ENCODE measurements at regions of chr19 and their contacts with region 1.

Region 1: DNA sequence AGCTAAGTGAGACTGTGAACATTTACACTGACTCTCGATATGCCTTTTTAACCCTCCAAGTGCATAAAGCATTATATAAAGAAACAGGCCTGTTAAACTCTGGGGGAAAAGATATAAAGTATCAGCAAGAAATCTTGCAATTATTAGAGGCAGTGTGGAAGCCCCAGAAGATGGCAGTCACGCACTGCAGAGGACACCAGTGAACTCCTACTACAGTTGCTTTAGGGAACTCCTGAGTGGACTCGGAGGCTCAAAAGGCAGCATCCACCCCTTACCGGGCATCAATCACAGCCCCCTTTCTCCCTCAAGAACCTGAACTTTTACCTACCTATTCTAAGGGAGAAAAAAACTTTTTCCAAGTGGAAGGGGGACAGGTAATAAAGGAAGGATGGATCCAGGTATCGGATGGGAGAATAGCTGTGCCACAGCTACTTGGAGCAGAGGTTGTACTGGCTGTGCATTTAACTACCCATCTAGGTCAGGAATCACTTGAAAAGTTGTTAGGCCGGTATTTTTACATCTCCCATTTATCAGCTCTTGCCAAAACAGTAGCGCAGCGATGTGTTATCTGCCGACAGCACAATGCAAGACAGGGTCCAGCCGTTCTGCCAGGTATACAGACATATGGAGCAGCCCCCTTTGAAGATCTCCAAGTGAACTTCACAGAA is 80.1 kb downstream of the ZNF486 start:
- DNase-seq: peak; percentile 59
- ATAC-seq: peak; percentile 28
- H3K4me3 ChIP-seq: no peak overlapping the region
- H3K4me3 Mint-ChIP-seq: no peak overlapping the region
- H3K27ac ChIP-seq: no peak overlapping the region
- H3K27ac Mint-ChIP-seq: no peak overlapping the region
- H3K4me1 ChIP-seq: peaks cover 0 to 13% of the 10 kb centered on the region in 2 donors
- H3K4me1 Mint-ChIP-seq: peaks cover 17% of the 10 kb centered on the region
- H3K27me3 ChIP-seq: no peaks in the 10 kb centered on the region
- H3K27me3 Mint-ChIP-seq: no peaks in the 10 kb centered on the region
- CTCF ChIP-seq: peak; percentile 48

Region 2: DNA sequence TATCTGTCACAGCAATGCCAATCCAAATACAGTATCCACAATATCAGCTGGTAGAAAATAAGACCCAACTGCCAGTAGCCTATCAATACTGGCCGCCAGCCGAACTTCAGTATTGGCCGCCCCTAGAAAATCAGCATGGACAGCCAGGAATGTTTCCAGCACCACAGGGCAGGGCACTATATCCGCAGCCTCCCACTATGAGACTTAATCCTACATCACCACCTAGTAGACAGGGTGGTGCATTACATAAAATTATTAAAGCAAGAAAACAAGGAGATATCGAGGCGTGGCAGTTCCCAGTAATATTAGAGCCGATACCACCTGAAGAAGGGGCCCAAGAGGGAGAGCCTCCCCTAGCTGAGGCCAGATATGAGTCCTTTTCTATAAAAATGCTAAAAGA is 31.2 kb after region 1 on chr19:
- CTCF ChIA-PET with region 1: interaction called, 5 read pairs
- POLR2A ChIA-PET with region 1: no interaction called
- intact Hi-C with region 1: loop called (anchors 1 kb)
- DNase-seq: peak; percentile 63
- ATAC-seq: peak; percentile 66
- H3K4me3 ChIP-seq: no peak overlapping the region
- H3K4me3 Mint-ChIP-seq: no peak overlapping the region
- H3K27ac ChIP-seq: no peak overlapping the region
- H3K27ac Mint-ChIP-seq: no peak overlapping the region
- H3K4me1 ChIP-seq: peaks cover 3 to 14% of the 10 kb centered on the region in 2 donors
- H3K4me1 Mint-ChIP-seq: peaks cover 34% of the 10 kb centered on the region
- H3K27me3 ChIP-seq: no peaks in the 10 kb centered on the region
- H3K27me3 Mint-ChIP-seq: no peaks in the 10 kb centered on the region
- CTCF ChIP-seq: peak; percentile 74

Region 3: GRCh38 chr19:20367811-20368294 is 120.7 kb after region 1 on chr19:
- CTCF ChIA-PET with region 1: no interaction called
- POLR2A ChIA-PET with region 1: no interaction called
- intact Hi-C with region 1: loop called (anchors 2 kb)
- DNase-seq: no peak
- ATAC-seq: no peak
- H3K4me3 ChIP-seq: no peak overlapping the region
- H3K4me3 Mint-ChIP-seq: no peak overlapping the region
- H3K27ac ChIP-seq: no peak overlapping the region
- H3K27ac Mint-ChIP-seq: no peak overlapping the region
- H3K4me1 ChIP-seq: no peaks in the 10 kb centered on the region
- H3K4me1 Mint-ChIP-seq: no peaks in the 10 kb centered on the region
- H3K27me3 ChIP-seq: no peaks in the 10 kb centered on the region
- H3K27me3 Mint-ChIP-seq: no peaks in the 10 kb centered on the region
- CTCF ChIP-seq: no peak

Region 4: DNA sequence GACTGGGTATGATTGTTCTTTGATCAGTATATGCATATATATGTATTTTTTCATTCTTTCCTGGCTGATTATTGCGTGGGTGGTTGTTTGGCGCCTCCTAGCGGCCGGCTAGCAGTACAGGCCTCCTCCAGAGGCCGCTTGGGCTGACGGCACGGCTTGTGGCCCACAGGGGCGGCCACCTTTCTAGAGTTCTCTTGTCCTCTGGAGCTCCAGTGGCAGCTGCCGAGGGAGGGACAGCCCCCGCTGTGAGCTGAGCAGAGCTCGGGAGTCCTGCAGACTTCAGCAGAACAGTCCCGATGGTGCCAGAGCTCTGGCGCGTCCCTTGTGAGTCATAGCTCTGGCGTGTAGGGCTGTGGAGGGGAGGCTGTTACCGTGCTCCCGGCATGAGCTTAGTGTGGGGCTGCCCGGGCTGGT is 1235.7 kb after region 1 on chr19:
- CTCF ChIA-PET with region 1: no interaction called
- POLR2A ChIA-PET with region 1: no interaction called
- intact Hi-C with region 1: loop called (anchors 5 kb)
- DNase-seq: peak; percentile 80
- ATAC-seq: peak; percentile 70
- H3K4me3 ChIP-seq: peak overlapping the region in 2 of 5 experiments; percentile 10 to 42
- H3K4me3 Mint-ChIP-seq: no peak overlapping the region
- H3K27ac ChIP-seq: no peak overlapping the region
- H3K27ac Mint-ChIP-seq: no peak overlapping the region
- H3K4me1 ChIP-seq: no peaks in the 10 kb centered on the region
- H3K4me1 Mint-ChIP-seq: no peaks in the 10 kb centered on the region
- H3K27me3 ChIP-seq: no peaks in the 10 kb centered on the region
- H3K27me3 Mint-ChIP-seq: no peaks in the 10 kb centered on the region
- CTCF ChIP-seq: peak; percentile 79

Region 5: DNA sequence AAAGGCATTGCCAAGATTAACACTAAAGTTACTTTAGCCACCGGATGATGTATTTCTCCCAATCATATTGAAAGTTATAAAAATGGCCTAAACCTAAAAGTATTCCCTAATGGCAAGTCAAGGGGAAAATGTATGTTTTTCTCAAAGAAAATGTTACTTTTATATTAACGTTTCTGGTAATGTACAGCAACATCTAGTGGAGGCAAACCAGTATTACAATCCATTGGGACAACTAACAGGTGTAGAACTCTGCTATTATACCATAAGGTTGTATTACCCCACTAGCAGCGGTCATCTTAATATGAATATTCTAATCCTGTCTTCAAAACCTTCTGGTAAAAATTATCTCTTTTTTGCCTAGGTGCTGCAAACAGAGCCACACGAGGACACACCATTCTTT is 1451.1 kb after region 1 on chr19:
- CTCF ChIA-PET with region 1: no interaction called
- POLR2A ChIA-PET with region 1: no interaction called
- intact Hi-C with region 1: loop called (anchors 5 kb)
- DNase-seq: peak; percentile 44
- ATAC-seq: no peak
- H3K4me3 ChIP-seq: no peak overlapping the region
- H3K4me3 Mint-ChIP-seq: no peak overlapping the region
- H3K27ac ChIP-seq: no peak overlapping the region
- H3K27ac Mint-ChIP-seq: no peak overlapping the region
- H3K4me1 ChIP-seq: no peaks in the 10 kb centered on the region
- H3K4me1 Mint-ChIP-seq: no peaks in the 10 kb centered on the region
- H3K27me3 ChIP-seq: no peaks in the 10 kb centered on the region
- H3K27me3 Mint-ChIP-seq: peaks cover 5% of the 10 kb centered on the region
- CTCF ChIP-seq: peak; percentile 68